Activated T-helper 1 cell treated with anti-CD3 and anti-CD28 coated beads, Interleukin-12 subunit alpha, Interleukin-12 subunit beta, Interleukin-2, Interleukin-4 antibody, amounts not matched to agents 30 ng/mL and 10 ng/mL and 1 ng/mL, durations not matched to agents 14 hours and 24 hours and 36 hours (primary cell): ENCODE measurements at regions of chr4 and their contacts with region 1.

Region 1: DNA sequence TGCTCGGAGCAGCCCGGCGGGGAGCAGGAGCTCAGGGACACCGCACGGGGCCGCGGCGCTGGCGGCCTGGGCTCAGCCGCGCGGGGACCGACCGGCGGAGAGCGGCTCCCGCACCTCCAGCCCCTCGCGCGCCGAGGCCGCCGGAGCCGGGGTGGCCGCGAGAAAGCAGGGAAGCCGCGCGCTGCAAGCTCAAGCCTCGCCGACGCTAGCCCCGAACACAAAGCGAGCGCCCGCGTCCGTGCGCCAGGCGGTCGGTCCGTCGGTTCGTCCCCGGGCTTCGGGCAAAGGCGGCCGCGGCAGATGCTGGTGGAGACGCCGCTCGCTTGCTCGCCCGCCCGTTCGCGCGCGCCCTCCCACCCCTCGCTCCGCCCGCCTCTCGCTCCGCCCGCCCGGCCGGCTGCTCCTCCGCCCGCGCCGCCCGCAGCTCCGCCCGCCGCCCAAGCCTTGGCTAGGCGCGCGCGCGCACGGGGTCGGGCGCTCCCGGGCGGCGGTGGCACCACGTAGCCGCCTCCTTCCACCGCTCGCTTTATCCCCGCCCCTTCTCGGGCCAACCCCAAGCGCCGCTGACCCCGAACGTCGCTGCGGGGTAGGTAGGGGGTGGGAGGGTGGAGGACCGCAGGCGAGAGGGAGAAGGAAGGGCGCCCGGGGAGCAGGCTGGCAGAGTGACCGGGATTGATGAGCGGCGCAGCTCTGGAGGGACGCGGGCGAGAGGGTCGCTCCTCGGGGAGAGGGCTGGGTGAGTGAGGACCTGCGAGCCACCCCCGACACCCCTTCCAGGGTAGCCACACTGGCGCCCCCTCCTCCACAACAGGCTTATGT is at the start of gene TSPAN5:
- DNase-seq: peak; percentile 80
- H3K4me3 Mint-ChIP-seq: peak within 1 kb of the TSS; percentile 96
- H3K27ac Mint-ChIP-seq: peak within 1 kb of the TSS; percentile 95
- H3K4me1 Mint-ChIP-seq: peaks cover 82% of the 10 kb centered on the region
- H3K27me3 Mint-ChIP-seq: no peaks in the 10 kb centered on the region
- total RNA-seq, gene TSPAN5: 34.1 and 35.5 TPM in 2 replicates

Region 2: DNA sequence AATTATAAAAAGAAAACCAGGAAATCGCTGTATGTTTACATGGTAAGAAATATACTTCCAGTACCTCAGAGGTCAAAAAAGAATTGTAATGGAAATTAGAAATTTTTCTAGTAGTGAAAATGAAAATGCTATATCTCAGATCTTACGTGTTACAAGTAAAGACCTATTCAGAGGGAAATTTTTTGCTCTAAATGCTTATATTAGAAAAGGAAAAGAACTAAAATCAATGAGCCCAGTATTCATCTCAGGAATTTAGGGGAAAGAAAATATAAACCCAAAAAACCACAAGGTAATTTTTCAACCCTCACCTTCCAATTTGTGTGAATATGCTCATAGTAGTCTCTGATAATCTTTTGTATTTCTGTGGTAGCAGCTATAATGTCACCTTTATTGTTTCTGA is 251.7 kb before region 1 on chr4:
- intact Hi-C with region 1: loop called (anchors 1 kb)
- DNase-seq: no peak
- H3K4me3 Mint-ChIP-seq: no peak overlapping the region
- H3K27ac Mint-ChIP-seq: no peak overlapping the region
- H3K4me1 Mint-ChIP-seq: peaks cover 25% of the 10 kb centered on the region
- H3K27me3 Mint-ChIP-seq: no peaks in the 10 kb centered on the region

Region 3: DNA sequence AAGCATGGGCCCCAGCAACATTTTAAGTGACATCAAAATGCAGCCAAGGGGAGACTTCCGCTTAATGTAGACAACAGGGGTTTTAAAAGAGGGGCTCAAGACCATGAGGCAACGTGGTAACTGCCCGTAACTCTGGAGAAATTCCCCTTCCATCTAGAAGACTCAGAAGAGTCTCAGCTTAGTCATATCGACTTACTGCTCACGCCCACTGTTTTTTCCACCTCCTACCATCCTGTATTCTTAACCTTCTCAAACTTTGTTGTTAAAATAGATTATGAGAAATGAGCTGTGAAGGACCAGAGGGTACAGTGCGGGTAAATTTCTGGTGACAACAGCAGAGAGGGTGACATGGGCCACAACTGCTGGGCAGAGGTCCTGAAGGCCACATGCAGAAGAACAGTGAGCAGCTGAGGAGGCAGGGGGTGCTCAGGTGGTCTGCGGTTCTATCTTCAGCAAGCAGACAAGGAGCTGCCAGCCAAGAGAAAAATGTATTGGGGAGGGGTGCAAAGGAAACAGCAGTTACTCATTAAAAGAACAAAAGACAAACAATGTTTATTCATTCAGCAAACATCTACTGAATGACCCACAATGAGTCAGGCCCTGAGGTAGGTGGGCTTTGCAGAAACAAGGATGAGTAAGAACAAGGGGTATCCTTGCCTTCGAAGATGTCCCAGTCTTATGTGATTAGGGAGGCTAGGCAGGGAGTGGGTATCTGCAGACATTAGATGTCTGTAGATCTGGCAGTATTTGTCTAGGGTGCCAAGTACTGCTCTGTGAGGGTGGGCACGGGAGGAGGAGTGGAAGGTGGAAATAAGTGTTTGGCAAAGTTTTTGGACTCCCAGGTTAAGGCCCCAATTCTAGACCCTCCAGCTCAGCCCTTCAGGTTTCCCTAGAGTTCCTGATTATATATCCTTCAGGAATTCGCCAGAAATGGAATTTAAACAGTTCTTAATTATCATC is 175.4 kb before region 1 on chr4:
- intact Hi-C with region 1: loop called (anchors 1 kb)
- DNase-seq: peak; percentile 40
- H3K4me3 Mint-ChIP-seq: peak overlapping the region; percentile 72
- H3K27ac Mint-ChIP-seq: peak overlapping the region; percentile 98
- H3K4me1 Mint-ChIP-seq: peaks cover 92% of the 10 kb centered on the region
- H3K27me3 Mint-ChIP-seq: no peaks in the 10 kb centered on the region

Region 4: DNA sequence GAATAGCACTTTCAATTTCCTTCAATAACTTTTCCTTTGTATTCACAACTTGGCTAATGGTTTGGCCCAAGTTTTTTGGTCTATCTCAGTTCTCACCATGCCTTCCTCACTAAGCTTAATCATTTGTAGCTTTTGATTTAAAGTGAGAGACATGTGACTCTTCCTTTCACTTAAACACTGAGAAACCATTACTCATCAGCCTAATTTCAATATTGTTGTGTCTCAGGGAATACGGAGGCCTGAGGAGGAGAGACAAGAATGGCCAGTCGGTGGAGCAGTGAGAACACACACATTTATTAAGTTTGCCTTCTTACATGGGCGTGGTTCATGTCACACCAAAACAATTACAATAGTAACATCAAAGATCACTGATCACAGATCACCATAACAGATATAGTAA is 56.8 kb before region 1 on chr4:
- intact Hi-C with region 1: loop called (anchors 1 kb)
- DNase-seq: no peak
- H3K4me3 Mint-ChIP-seq: peak overlapping the region; percentile 73
- H3K27ac Mint-ChIP-seq: peak overlapping the region; percentile 90
- H3K4me1 Mint-ChIP-seq: peaks cover 60% of the 10 kb centered on the region
- H3K27me3 Mint-ChIP-seq: no peaks in the 10 kb centered on the region

Region 5: GRCh38 chr4:98794565-98795205 is 136.2 kb after region 1 on chr4:
- intact Hi-C with region 1: loop called (anchors 5 kb)
- DNase-seq: no peak
- H3K4me3 Mint-ChIP-seq: no peak overlapping the region
- H3K27ac Mint-ChIP-seq: no peak overlapping the region
- H3K4me1 Mint-ChIP-seq: peaks cover 23% of the 10 kb centered on the region
- H3K27me3 Mint-ChIP-seq: peaks cover 3% of the 10 kb centered on the region

Region 6: DNA sequence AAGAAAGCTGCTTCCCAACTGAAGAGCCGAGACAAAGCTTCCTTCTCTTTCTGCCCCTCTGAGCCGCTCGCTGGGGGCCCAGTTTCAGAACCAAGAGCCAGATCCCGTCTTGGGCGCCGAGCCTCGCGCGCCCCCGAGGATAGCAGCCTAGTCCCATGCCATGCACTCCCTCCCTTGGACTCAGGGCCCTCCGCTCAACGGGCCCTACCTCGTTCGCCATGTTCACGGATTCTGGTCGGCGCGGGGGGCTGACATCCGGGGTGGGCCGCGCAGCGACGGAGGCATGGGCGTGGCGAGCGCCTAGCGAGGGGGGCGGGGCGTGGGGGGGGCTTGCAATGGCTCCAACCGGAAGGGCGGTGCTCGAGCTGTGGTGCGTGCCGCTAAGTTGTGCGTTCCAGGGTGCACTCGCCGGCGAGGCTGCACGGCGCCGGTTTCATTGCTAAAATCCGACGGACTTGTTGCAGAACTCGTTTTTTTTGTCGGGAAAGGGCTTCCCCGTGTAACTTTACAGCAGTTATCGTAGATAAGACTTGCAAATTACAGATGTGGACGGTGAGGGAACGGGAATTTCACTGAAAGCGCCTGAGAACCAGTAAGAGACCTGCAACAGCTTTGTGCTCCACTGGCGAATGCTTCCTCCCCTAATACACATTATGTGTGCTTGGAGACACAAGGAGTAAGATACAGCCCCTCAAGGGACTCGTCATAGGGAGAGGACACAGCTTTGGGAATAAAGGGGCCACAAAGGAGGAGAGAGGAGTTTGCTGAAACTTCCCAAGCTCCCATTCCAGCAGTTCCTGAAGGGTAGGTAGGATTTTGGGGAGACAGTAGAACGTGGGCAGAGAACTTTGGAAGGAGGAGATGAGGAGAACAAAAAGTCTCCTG is 430.2 kb after region 1 on chr4 and contains the start of gene ADH5:
- intact Hi-C with region 1: loop called (anchors 5 kb)
- DNase-seq: peak; percentile 77
- H3K4me3 Mint-ChIP-seq: peak within 1 kb of the TSS; percentile 98
- H3K27ac Mint-ChIP-seq: peak within 1 kb of the TSS; percentile 98
- H3K4me1 Mint-ChIP-seq: peaks cover 50% of the 10 kb centered on the region
- H3K27me3 Mint-ChIP-seq: peaks cover 2% of the 10 kb centered on the region
- total RNA-seq, gene ADH5: 68.8 and 74.9 TPM in 2 replicates

Region 7: GRCh38 chr4:99949034-99949998 is 1290.8 kb after region 1 on chr4:
- intact Hi-C with region 1: loop called (anchors 10 kb)
- DNase-seq: peak; percentile 82
- H3K4me3 Mint-ChIP-seq: no peak overlapping the region
- H3K27ac Mint-ChIP-seq: no peak overlapping the region
- H3K4me1 Mint-ChIP-seq: peaks cover 30% of the 10 kb centered on the region
- H3K27me3 Mint-ChIP-seq: no peaks in the 10 kb centered on the region